Mammary epithelial cell (primary cell): ENCODE measurements at regions of chr1 and their contacts with region 1.

Region 1: GRCh38 chr1:21022279-21023040 is 154.2 kb downstream of the EIF4G3 start:
- DNase-seq: peak; percentile 97
- H3K4me3 ChIP-seq: no peak overlapping the region
- H3K27ac ChIP-seq: peak overlapping the region; percentile 82
- H3K4me1 ChIP-seq: peaks cover 17% of the 10 kb centered on the region
- H3K27me3 ChIP-seq: no peaks in the 10 kb centered on the region
- CTCF ChIP-seq: no peak

Region 2: DNA sequence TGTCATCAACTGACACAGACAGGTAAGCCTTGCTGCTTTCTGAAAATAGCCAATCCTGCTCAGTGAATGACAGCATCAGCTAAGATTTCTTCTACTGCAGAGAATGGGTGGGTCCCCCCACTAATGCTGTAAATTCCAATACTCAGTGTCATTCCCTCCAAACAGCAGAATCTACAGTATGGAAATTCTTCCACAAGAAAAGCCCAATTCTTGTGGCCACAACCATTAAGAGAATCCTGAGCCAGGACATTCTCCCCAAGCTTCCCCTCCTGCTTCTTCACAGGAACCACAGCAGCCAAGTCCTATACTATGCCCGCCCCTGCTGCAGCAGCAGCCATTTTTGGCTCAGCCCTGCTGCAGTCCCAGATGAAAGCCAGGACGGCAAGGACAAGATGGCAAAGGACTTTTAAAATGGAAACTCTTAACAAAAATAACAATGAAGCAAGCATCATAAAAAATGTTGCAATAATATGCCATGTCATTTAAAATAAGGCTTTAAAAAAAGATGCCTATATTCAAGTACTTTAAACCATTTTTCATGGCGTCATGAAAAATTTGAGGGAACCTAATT is 127.5 kb after region 1 on chr1:
- CTCF ChIA-PET with region 1: no interaction called
- dilution Hi-C with region 1: no loop called
- in situ Hi-C with region 1: no loop called
- intact Hi-C with region 1: loop called (anchors 2 kb)
- DNase-seq: peak; percentile 94
- H3K4me3 ChIP-seq: peak overlapping the region in 1 of 3 experiments; percentile 11
- H3K27ac ChIP-seq: peak overlapping the region; percentile 94
- H3K4me1 ChIP-seq: peaks cover 28% of the 10 kb centered on the region
- H3K27me3 ChIP-seq: no peaks in the 10 kb centered on the region
- CTCF ChIP-seq: no peak

Region 3: DNA sequence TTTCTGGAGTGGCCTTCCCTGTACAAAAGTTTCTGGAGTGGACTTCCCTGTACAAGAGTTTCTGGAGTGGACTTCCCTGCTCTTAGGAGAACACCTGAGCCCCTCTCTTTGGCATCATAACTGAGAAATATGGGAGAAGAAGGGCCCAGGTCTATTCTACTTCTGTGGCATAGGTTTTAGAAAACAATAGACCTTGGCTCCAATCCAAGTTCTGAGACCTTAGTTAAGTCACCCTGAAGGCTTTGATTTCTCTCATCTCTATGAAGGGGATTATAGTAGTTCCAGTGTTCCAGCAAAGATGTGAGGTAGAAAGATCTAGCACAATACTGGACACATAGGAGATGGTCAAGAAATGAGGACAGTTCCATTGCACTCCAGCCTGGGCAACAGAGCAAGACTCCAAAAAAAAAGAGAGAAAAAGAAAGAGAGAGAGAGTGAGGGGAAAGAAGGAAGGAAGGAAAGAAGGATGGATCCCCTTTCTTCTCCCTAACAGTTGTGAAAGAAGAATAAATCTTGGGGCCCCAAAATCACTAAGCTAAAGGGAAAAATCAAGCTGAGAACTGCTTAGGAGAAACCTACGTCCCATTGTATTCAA is 167.5 kb after region 1 on chr1:
- CTCF ChIA-PET with region 1: no interaction called
- dilution Hi-C with region 1: loop called (anchors 5 kb)
- in situ Hi-C with region 1: no loop called
- intact Hi-C with region 1: no loop called
- DNase-seq: no peak
- H3K4me3 ChIP-seq: no peak overlapping the region
- H3K27ac ChIP-seq: no peak overlapping the region
- H3K4me1 ChIP-seq: no peaks in the 10 kb centered on the region
- H3K27me3 ChIP-seq: no peaks in the 10 kb centered on the region
- CTCF ChIP-seq: no peak